Heart right ventricle (tissue), 16 donors: ENCODE measurements at regions of chr5 and their contacts with region 1.

Region 1: DNA sequence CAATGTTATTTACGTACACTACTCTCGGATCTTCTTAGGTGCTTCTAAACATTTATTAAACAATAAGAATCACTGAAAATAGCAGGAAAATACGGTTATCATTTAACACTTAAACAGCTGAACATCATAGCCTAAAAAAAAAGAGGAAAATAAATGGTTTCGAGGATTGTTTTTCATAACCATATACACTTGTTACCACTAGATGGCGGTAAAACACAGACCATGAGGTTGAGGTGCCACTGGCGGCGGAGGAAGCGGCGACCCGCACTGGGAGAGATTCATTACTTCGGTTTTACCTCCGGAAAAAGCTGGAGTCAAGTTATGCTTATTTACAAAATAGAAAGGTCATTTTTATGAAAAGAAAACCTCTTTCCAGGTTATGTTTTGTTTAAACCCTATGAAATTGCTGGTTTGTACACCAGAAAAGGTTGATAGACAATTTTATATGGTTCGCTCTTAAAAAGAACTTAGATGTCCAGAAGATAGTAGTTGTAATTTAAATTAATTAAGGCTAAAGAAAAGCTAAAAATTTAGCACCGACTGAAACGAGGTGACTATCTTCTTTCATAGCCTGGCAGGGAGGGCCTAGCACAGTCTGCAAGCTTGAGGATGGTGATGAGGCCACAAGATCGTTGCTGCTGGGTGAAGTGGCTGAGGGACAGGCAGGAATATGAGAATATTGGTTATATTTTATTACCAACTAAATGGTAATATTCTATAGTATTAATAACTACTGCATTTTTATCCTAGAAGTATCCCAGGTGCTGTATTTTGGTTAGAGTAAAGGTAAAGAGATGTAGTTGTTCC is 605.7 kb downstream of the RAB3C start:
- DNase-seq: peak; percentile 65 to 66
- ATAC-seq: peak; percentile 70 to 86 (median 82)
- H3K4me3 ChIP-seq: peak overlapping the region in 6 of 10 donors; percentile 8 to 46 (median 32)
- H3K27ac ChIP-seq: peak overlapping the region in 4 of 10 donors; percentile 7 to 63 (median 28)
- H3K4me1 ChIP-seq: peaks cover 0 to 40% (median 5%) of the 10 kb centered on the region in 9 donors
- H3K27me3 ChIP-seq: no peaks in the 10 kb centered on the region
- CTCF ChIP-seq: peak; percentile 66 to 93 (median 82)

Region 2: GRCh38 chr5:58410441-58410840 is 778.2 kb before region 1 on chr5:
- intact Hi-C with region 1: no loop called
- DNase-seq: peak in 1 of 2 donors; percentile 13
- ATAC-seq: peak in 7 of 8 donors; percentile 52 to 80 (median 70)
- H3K4me3 ChIP-seq: no peak overlapping the region
- H3K27ac ChIP-seq: no peak overlapping the region
- H3K4me1 ChIP-seq: peaks cover 0 to 24% (median 5%) of the 10 kb centered on the region in 9 donors
- H3K27me3 ChIP-seq: no peaks in the 10 kb centered on the region
- CTCF ChIP-seq: no peak

Region 3: GRCh38 chr5:59351076-59351794 is 162.6 kb after region 1 on chr5:
- intact Hi-C with region 1: no loop called
- DNase-seq: peak in 1 of 2 donors; percentile 48
- ATAC-seq: peak; percentile 84 to 96 (median 95)
- H3K4me3 ChIP-seq: peak overlapping the region in 1 of 10 donors; percentile 15
- H3K27ac ChIP-seq: peak overlapping the region in 5 of 10 donors; percentile 35 to 64 (median 57)
- H3K4me1 ChIP-seq: peaks cover 0 to 35% (median 23%) of the 10 kb centered on the region in 9 donors
- H3K27me3 ChIP-seq: no peaks in the 10 kb centered on the region
- CTCF ChIP-seq: peak in 7 of 9 donors; percentile 5 to 65 (median 45)

Region 4: GRCh38 chr5:59367791-59368394 is 179.3 kb after region 1 on chr5:
- intact Hi-C with region 1: loop called in 9 of 10 experiments (anchors 1 to 5 kb)
- DNase-seq: peak in 1 of 2 donors; percentile 70
- ATAC-seq: peak in 7 of 8 donors; percentile 41 to 86 (median 72)
- H3K4me3 ChIP-seq: no peak overlapping the region
- H3K27ac ChIP-seq: no peak overlapping the region
- H3K4me1 ChIP-seq: peaks cover 0 to 8% (median 0%) of the 10 kb centered on the region in 9 donors
- H3K27me3 ChIP-seq: no peaks in the 10 kb centered on the region
- CTCF ChIP-seq: peak; percentile 50 to 89 (median 83)

Region 5: DNA sequence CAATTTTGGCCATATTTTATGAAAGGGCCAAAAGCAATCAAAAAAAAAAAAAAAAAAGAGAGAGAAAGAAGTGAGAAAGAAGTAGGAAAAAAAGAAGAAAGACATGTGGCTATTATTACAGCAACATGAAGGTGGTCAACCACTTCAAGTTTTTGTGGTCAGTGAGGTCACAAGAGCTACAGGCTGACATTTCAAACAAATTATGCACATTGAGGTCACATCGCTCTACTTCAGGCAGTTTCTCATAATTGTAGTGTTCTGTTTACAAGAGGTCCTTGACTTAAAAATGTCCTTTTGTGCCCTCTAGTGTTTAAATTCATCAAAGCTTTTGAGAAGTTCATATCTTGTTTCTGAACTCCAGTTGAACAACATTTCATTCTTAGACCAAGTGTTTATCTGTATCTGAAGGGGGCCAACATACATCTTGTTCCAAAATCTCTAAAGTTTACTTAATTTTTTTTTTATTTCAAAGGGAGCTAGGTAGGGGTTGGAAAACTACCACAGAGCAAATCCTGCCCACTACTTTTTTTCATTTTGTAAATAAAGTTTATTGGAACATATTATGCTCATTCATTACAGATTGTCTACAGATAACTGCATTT is 191.8 kb after region 1 on chr5:
- intact Hi-C with region 1: loop called in 7 of 10 experiments (anchors 1 to 5 kb)
- DNase-seq: no peak
- ATAC-seq: peak in 6 of 8 donors; percentile 38 to 77 (median 67)
- H3K4me3 ChIP-seq: no peak overlapping the region
- H3K27ac ChIP-seq: no peak overlapping the region
- H3K4me1 ChIP-seq: no peaks in the 10 kb centered on the region
- H3K27me3 ChIP-seq: no peaks in the 10 kb centered on the region
- CTCF ChIP-seq: peak; percentile 11 to 74 (median 63)

Region 6: DNA sequence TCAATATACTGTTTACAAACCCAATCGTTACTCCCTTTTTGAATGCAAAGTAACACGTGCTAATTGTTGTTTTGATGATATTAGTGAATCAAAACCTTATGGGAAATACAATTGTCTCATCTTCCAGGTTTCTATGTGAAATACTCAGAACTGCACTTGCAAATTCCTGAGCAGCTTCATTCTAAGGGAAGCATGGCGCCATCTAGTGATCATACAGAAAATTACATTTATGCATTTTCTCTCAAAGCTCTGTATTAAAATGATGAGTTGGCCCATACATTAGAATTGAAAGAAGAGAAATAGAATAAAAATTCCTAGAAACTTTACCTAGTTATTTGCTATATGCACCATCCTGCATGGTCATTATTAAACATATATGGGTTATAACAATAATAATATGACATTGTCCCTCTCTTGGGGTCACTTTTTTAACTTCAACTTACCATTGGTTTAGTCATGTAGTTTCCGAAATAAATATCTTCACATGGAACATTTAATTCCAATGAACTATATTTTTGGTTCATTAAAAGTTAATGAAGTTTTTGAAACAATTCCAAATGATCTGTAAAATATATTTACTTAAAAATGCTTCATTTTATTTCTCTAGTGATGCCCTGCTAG is 484.9 kb after region 1 on chr5:
- intact Hi-C with region 1: loop called in 3 of 10 experiments (anchors 10 kb)
- DNase-seq: no peak
- ATAC-seq: no peak
- H3K4me3 ChIP-seq: no peak overlapping the region
- H3K27ac ChIP-seq: no peak overlapping the region
- H3K4me1 ChIP-seq: no peaks in the 10 kb centered on the region
- H3K27me3 ChIP-seq: no peaks in the 10 kb centered on the region
- CTCF ChIP-seq: peak; percentile 70 to 88 (median 84)

Region 7: DNA sequence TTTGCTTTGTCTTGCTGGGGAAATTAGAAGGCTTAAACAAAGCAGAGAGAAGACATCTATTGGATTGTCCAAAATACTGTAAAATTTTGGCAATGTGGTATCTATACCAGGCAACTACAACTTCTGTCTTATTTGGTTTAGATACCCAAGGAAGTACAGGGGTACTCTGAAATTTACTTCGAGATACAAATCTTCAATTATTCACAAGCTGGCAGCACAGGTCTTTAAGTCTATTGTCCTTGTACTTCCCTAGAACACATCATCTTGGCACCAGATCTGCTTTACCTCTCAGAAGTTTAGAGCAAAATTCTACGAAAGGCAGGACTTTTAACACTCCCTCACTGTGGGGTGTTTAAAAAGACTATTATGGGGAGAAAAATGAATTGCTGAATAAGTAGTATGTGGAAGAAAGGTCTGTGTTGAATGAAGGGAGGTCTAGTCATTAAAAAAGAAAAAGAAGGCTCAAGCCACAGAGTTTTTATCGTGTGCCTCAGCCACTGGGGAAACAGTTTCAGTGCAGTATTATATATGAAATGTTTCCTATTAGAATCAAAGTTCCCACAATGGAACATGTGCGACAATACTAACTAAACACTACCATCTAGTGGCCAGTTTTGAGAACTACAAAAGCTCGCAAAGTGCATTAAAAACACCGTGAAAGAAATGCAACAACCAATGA is 611.2 kb after region 1 on chr5:
- intact Hi-C with region 1: loop called in 2 of 10 experiments (anchors 10 kb)
- DNase-seq: no peak
- ATAC-seq: peak in 7 of 8 donors; percentile 65 to 83 (median 75)
- H3K4me3 ChIP-seq: peak overlapping the region in 5 of 10 donors; percentile 2 to 30 (median 11)
- H3K27ac ChIP-seq: peak overlapping the region in 7 of 10 donors; percentile 1 to 43 (median 23)
- H3K4me1 ChIP-seq: peaks cover 0 to 28% (median 15%) of the 10 kb centered on the region in 9 donors
- H3K27me3 ChIP-seq: no peaks in the 10 kb centered on the region
- CTCF ChIP-seq: peak; percentile 57 to 86 (median 80)